ENCODE measurements at regions of chr1 and their contacts with region 1.

Region 1: GRCh38 chr1:95043141-95043980 is 29.4 kb downstream of the ALG14 start:
- H3K4me3 ChIP-seq: no peak overlapping the region
- H3K27ac ChIP-seq: no peak overlapping the region
- H3K4me1 ChIP-seq: no peaks in the 10 kb centered on the region
- CTCF ChIP-seq: peak; percentile 99

Region 2: DNA sequence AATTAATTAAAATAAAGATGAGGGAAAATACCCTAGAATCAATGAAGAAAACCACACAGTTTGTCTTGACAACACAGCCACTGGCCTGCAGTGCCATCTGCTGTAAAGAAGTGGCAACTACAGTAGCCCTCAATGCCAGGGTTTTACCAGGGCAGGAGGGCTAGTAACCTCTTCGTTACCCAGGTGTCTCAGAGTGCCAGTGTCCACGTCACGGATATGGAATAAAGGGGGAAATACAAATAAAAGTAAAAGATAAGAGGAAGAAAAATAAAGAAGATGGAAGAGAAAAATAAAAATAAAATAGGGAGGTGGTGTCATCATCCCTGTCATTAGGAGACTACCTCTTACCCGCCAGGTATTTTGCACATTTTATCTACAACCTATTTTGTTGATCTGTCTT is 237.4 kb before region 1 on chr1:
- CTCF ChIA-PET with region 1: interaction called, 36 read pairs
- POLR2A ChIA-PET with region 1: no interaction called
- H3K4me3 ChIP-seq: no peak overlapping the region
- H3K27ac ChIP-seq: no peak overlapping the region
- H3K4me1 ChIP-seq: peaks cover 9% of the 10 kb centered on the region
- CTCF ChIP-seq: peak; percentile 75

Region 3: GRCh38 chr1:94854458-94855306 is 188.7 kb before region 1 on chr1:
- CTCF ChIA-PET with region 1: interaction called, 142 read pairs
- POLR2A ChIA-PET with region 1: interaction called, 11 read pairs
- H3K4me3 ChIP-seq: peak overlapping the region; percentile 46
- H3K27ac ChIP-seq: no peak overlapping the region
- H3K4me1 ChIP-seq: peaks cover 5% of the 10 kb centered on the region; the same call in 1 of the 2 replicates
- CTCF ChIP-seq: peak; percentile 90

Region 4: DNA sequence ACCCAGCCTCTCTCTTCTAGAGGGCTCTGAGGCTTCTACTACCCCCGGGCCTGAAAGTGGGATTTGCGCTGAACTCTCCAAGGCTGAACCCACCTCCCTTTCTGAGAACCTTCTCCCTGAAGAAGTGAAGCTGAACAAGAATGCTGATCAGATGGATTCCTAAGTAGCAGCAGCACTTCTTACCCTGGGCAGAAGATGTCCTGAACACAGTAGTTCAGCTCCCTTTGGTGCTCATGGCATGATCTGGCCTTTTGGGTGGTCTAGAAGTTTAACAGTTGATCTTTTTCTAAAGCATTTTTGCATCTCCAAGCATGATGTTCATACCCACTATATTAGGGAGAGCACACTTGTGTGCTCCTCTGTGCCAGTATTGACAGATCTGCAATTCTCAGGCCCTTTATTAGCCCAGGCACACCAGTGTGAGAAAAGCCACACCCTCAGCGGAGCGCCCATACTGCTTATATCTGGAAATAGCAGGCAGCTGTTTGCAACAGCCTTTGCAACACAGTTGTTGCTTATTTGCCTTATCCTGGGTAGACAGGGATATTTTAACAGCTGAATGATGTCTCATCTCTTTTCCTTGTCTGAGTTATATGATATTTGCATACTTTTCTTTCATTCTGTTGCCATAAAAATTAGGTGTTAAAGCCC is 150.6 kb before region 1 on chr1:
- CTCF ChIA-PET with region 1: interaction called, 10 read pairs
- POLR2A ChIA-PET with region 1: no interaction called
- H3K4me3 ChIP-seq: no peak overlapping the region
- H3K27ac ChIP-seq: no peak overlapping the region
- H3K4me1 ChIP-seq: no peaks in the 10 kb centered on the region
- CTCF ChIP-seq: no peak

Region 5: DNA sequence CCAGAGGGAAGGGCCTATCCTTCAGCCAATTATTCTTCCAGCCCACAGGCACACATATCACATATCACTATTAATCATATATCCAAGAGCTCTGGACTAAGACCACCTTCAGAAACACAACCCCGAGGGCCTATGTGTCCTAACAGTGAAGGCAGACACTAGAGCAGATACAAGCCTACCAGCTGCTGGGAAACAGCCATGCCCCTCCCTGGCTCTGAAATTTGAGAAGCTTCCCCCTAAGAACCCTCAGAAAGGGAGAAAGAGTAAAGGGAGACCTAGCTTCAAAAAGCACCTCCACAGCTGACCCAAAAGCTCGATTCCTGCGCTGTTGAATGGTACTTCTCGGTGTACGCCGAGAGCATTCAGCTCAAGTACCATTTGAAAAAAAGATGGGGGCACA is 133.9 kb before region 1 on chr1:
- CTCF ChIA-PET with region 1: interaction called, 11 read pairs
- POLR2A ChIA-PET with region 1: no interaction called
- H3K4me3 ChIP-seq: no peak overlapping the region
- H3K27ac ChIP-seq: no peak overlapping the region
- H3K4me1 ChIP-seq: peaks cover 18% of the 10 kb centered on the region
- CTCF ChIP-seq: no peak

Region 6: DNA sequence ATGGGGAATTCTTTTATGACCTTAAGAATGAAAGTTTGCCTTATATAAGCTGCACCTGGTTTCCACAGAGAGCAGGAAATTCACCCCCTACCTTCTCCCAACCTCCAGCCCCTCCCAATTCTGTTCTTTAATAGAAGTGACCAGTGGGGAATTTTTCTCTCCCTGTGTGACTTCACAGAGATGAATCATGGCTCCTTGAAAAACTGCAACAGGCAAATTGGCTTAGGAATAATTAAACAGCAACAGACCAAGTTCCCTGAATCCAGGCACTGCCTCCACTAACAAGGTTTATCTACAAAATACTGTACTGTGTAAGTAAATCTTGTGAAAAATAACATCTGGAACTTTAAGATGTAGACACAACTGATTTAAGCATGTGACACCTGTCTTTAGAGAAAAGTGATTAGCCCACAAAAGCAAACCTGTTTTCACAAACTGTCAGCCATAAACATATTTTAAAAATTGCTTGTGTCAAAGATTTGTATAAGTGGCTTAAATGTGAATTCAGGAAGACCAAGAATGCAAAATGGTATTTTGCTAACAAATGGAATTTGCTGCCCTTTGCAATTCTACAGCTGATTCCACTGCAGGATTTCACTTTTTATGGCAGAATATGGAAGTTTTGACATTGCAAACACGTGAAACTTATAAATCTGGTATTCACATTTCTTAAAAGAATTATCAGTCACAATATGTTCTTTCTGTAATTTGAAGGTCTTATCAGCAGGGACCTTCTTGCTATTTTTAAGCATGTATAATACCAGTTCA is 24.6 kb before region 1 on chr1:
- CTCF ChIA-PET with region 1: interaction called, 10 read pairs
- POLR2A ChIA-PET with region 1: no interaction called
- H3K4me3 ChIP-seq: no peak overlapping the region
- H3K27ac ChIP-seq: no peak overlapping the region
- H3K4me1 ChIP-seq: peaks cover 9% of the 10 kb centered on the region; the same call in 1 of the 2 replicates
- CTCF ChIP-seq: no peak

Region 7: DNA sequence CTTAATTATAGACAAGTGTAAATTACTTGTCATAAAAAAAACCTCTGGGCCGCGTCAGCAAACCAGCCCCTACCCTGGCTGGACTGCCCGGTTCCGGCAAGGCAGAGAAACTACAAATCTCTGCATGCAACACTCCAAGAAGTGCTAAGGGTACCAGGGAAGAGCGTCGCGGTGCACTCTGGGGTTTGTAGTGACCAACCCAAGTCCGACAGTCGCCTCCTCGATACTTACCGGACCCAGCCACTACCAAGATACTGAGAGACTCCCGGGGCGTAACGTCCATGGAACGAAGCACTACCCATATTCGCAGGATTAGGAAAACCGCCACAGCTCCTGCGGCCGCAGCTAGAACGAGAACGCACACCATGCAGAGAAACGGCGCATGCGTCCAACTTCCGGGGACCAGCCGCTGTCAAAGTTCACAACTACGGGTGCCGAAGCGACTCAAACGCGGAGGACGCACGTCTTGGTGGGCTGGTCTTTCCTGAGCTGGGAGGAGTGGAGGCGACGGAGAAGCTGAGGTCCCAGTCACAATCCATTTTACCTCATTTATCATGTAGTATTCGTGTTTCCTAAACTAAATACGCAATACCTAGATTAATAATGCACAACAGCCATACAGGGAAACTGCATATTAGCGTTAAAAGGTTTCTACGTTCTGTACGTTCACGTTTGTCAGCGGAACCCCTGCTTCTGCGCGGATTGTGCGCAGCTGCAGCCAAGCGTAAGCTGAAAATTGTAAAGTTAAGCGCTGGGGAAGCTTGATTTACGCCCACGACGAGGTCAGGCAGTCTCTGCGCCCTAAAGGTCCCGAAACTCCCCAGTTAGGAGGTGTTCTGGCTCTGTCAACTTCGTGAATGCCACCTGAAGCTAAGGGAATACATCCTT is 29.4 kb after region 1 on chr1 and contains the start of gene ALG14:
- CTCF ChIA-PET with region 1: no interaction called
- POLR2A ChIA-PET with region 1: no interaction called
- H3K4me3 ChIP-seq: peak within 1 kb of the TSS; percentile 91
- H3K27ac ChIP-seq: peak within 1 kb of the TSS; percentile 61
- H3K4me1 ChIP-seq: peaks cover 3% of the 10 kb centered on the region; the same call in 1 of the 2 replicates
- CTCF ChIP-seq: no peak

Region 8: DNA sequence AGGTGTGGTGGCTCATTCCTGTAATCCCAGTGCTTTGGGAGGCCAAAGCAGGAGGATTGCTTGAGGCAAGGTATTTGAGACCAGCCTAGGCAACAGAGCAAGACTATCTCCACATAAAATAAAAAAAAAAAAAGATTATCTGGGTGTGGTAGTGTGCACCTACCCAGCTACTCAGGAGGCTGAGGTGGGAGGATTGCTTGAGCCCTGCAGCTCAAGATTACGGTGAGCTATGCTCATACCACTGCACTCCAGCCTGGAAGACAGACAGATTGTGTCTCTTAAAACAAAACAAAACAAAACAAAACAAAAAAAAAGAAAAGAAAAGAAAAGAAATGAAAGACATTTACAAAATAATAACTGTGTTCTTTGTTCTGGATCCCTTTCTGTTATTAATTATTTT is 67.7 kb after region 1 on chr1:
- CTCF ChIA-PET with region 1: no interaction called
- POLR2A ChIA-PET with region 1: no interaction called
- H3K4me3 ChIP-seq: no peak overlapping the region
- H3K27ac ChIP-seq: no peak overlapping the region
- H3K4me1 ChIP-seq: no peaks in the 10 kb centered on the region
- CTCF ChIP-seq: no peak

Region 9: GRCh38 chr1:95179205-95179986 is 136.0 kb after region 1 on chr1:
- CTCF ChIA-PET with region 1: no interaction called
- POLR2A ChIA-PET with region 1: no interaction called
- H3K4me3 ChIP-seq: no peak overlapping the region
- H3K27ac ChIP-seq: no peak overlapping the region
- H3K4me1 ChIP-seq: no peaks in the 10 kb centered on the region
- CTCF ChIP-seq: no peak

Region 10: DNA sequence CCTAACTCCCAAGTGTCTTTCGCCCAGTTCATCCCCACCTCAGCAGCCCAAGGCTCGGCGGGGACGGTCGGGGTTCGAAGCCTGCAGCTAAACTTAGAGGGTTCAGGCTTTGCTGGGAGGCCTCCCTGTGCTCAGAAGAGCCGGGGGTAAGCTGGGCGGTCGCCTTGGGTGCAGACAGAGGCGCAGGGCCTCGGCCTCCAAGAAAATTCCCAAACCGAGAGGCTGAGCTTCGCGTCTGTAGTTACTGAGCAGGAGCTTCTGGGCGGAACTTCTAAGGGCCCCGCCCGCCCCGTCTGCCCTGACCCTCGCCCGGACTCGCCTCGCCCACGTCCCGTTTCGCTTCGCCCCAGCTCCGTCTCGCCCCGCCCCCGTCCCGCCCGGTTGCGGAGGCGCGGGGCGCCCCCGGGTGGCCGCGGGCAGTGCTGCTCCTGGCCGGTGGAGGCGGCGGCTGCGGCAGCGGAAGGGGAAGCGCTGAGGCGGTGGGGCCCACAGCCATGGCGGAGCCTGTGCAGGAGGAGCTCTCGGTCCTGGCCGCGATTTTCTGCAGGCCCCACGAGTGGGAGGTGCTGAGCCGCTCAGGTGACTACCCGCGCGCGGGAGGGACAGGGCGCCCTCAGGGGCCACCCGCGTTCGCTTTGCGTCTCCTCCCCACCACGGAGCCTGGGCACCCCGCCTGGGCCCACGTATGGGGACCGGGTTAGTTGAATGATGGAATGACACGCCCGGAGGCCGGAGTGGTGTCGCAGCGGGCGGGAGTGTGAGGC is 190.6 kb after region 1 on chr1 and contains the start of gene RWDD3:
- CTCF ChIA-PET with region 1: interaction called, 11 read pairs
- POLR2A ChIA-PET with region 1: interaction called, 4 read pairs
- H3K4me3 ChIP-seq: peak within 1 kb of the TSS; percentile 98
- H3K27ac ChIP-seq: peak within 1 kb of the TSS; percentile 70; the same call in 1 of the 2 replicates
- H3K4me1 ChIP-seq: no peaks in the 10 kb centered on the region
- CTCF ChIP-seq: peak; percentile 76

Region 11: DNA sequence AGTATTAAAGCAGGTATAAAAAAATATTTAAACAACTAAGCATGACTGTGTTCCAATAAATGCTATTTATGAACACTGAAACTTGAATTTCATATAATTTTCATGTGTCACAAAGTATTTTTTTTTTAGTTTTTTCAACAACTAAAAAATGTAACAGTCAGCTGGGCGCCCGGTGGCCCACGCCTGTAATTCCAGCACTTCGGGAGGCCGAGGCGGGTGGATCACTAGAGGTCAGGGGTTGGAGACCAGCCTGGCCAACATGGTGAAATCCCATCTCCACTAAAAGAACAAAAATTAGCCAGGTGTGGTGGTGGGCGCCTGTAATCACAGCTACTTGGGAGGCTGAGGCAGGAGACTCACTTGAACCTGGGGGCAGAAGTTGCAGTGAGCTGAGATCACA is 233.1 kb after region 1 on chr1:
- CTCF ChIA-PET with region 1: no interaction called
- POLR2A ChIA-PET with region 1: no interaction called
- H3K4me3 ChIP-seq: no peak overlapping the region
- H3K27ac ChIP-seq: no peak overlapping the region
- H3K4me1 ChIP-seq: no peaks in the 10 kb centered on the region
- CTCF ChIP-seq: no peak

Measured in HEK293 (cell line).